Activated T-helper 2 cell treated with anti-CD3 and anti-CD28 coated beads, Interferon-gamma antibody, Interleukin-2, Interleukin-4, amounts not matched to agents 10 μg/mL and 5 μg/mL and 100 μg/mL, durations not matched to agents 14 hours and 24 hours and 36 hours (primary cell): ENCODE measurements at regions of chr2 and their contacts with region 1.

Region 1: GRCh38 chr2:42935692-42936681 is 143.6 kb upstream of the HAAO start:
- DNase-seq: no peak
- H3K4me3 Mint-ChIP-seq: no peak overlapping the region
- H3K27ac Mint-ChIP-seq: no peak overlapping the region
- H3K4me1 Mint-ChIP-seq: no peaks in the 10 kb centered on the region
- H3K27me3 Mint-ChIP-seq: peaks cover 3% of the 10 kb centered on the region

Region 2: GRCh38 chr2:42844901-42845821 is 90.8 kb before region 1 on chr2:
- intact Hi-C with region 1: loop called (anchors 5 kb)
- DNase-seq: no peak
- H3K4me3 Mint-ChIP-seq: no peak overlapping the region
- H3K27ac Mint-ChIP-seq: no peak overlapping the region
- H3K4me1 Mint-ChIP-seq: no peaks in the 10 kb centered on the region
- H3K27me3 Mint-ChIP-seq: peaks cover 9% of the 10 kb centered on the region